Aorta (tissue), 5 donors: ENCODE measurements at regions of chr1 and their contacts with region 1.

Region 1: GRCh38 chr1:227734856-227735538 is at the starts of genes JMJD4 and SNAP47:
- DNase-seq: peak; percentile 94 to 96
- ATAC-seq: peak; percentile 94
- H3K4me3 ChIP-seq: peak within 1 kb of the TSS; percentile 64 to 73
- H3K27ac ChIP-seq: peak within 1 kb of the TSS in 1 of 2 donors; percentile 53
- H3K4me1 ChIP-seq: no peaks in the 10 kb centered on the region
- H3K27me3 ChIP-seq: no peaks in the 10 kb centered on the region
- total RNA-seq, gene JMJD4: 13.3 to 14.4 TPM
- total RNA-seq, gene SNAP47: 18.1 to 24.6 TPM

Region 2: GRCh38 chr1:227542143-227543120 is 192.6 kb before region 1 on chr1:
- intact Hi-C with region 1: loop called in 1 of 2 experiments (anchors 5 kb)
- DNase-seq: peak; percentile 93 to 96
- ATAC-seq: peak; percentile 94
- H3K4me3 ChIP-seq: peak overlapping the region; percentile 50 to 75
- H3K27ac ChIP-seq: no peak overlapping the region
- H3K4me1 ChIP-seq: no peaks in the 10 kb centered on the region
- H3K27me3 ChIP-seq: no peaks in the 10 kb centered on the region

Region 3: GRCh38 chr1:227563324-227564201 is 171.4 kb before region 1 on chr1 and contains the start of gene ZNF678:
- intact Hi-C with region 1: loop called in 1 of 2 experiments (anchors 5 kb)
- DNase-seq: peak; percentile 94 to 95
- ATAC-seq: peak; percentile 92
- H3K4me3 ChIP-seq: peak within 1 kb of the TSS; percentile 71 to 86
- H3K27ac ChIP-seq: peak within 1 kb of the TSS; percentile 67 to 77
- H3K4me1 ChIP-seq: no peaks in the 10 kb centered on the region
- H3K27me3 ChIP-seq: no peaks in the 10 kb centered on the region
- total RNA-seq, gene ZNF678: 7.2 to 9.7 TPM

Region 4: DNA sequence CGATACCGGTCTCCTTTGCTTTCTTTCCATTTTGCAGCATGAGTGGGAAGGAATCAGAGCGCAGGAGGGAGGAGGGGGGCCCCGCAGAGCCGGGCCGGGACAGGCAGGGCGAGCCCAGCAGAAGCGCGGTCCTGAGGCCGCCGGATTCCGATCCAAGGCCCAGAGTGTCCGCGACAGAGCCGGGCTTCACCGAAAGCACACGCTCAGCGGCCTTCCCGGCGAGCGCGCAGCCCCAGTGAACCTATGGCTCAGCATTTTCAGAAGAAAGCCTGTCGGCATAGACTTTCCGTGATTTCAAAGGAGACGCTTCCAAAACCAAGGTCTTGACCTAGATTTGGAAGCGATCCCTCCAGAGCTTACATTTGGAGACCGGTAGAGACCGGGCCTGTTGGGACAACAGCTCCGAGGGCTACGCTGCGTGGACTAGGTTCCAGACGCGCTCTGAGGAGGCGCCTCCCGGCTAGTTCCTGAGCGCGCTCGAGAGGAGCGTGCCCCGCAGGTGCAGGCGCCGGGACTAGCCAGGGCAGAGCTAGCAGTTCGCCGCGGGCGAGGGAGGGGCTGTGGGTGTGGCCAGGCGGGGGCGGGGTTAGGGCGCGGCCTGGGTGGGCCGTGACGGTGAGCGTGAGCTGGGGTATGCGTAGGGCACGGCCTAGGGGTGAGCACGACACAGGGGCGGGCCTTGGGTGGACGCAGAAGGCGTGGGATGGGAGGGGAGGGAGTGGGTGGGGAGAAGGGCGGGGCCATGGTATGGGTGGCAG is 52.7 kb after region 1 on chr1:
- intact Hi-C with region 1: loop called in 1 of 2 experiments (anchors 10 kb)
- DNase-seq: peak; percentile 94 to 96
- ATAC-seq: peak; percentile 95
- H3K4me3 ChIP-seq: peak overlapping the region; percentile 37 to 78
- H3K27ac ChIP-seq: peak overlapping the region in 1 of 2 donors; percentile 55
- H3K4me1 ChIP-seq: no peaks in the 10 kb centered on the region
- H3K27me3 ChIP-seq: no peaks in the 10 kb centered on the region

Region 5: GRCh38 chr1:228109073-228109961 is 374.3 kb after region 1 on chr1 and contains the start of gene MRPL55:
- intact Hi-C with region 1: loop called in 1 of 2 experiments (anchors 10 kb)
- DNase-seq: peak; percentile 97 to 99
- ATAC-seq: peak; percentile 99
- H3K4me3 ChIP-seq: peak within 1 kb of the TSS; percentile 36 to 69
- H3K27ac ChIP-seq: peak within 1 kb of the TSS in 1 of 2 donors; percentile 66
- H3K4me1 ChIP-seq: no peaks in the 10 kb centered on the region
- H3K27me3 ChIP-seq: no peaks in the 10 kb centered on the region
- total RNA-seq, gene MRPL55: 27.4 to 35.4 TPM